ENCODE measurements at regions of chr1 and their contacts with region 1.

Region 1: DNA sequence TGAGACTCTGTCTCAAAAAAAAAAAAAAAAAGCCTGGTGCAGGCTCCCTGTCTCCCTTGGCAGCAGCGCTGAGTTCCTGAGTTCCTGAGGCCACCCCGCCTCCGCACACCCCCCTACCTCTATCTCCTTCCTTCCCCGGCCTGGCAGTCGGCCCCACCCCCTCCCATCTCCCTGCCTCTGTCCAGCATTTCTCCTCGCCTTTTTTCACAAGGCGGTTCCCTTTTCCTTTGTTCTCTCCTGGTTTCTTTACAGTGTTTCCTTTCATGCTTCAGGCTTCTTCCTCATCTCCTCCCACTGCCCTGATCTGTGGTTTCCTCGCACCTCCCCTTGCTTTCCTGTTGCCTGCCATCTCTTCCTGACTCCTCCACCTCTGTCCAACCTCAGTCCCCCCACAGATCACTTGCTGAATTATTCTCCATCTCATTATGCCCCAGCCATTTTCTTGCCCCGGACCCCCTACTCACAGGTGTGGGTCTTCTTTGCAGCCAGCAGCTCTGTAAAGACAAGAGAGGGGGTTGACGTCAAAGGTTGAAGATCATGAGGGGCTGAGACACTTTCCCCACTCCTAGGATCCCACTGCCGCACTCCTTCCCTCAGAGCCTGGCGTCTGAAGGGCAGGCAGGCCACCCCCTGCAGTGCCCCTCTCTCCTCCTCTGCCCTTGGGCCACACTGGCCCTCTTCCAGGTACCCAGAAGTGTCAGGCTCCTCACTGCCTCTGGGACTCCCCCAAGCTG is 2.5 kb downstream of the RORC start:
- DNase-seq: no peak
- H3K4me3 Mint-ChIP-seq: peak overlapping the region; percentile 22
- H3K27ac Mint-ChIP-seq: peak overlapping the region; percentile 86
- H3K4me1 Mint-ChIP-seq: peaks cover 69% of the 10 kb centered on the region
- H3K27me3 Mint-ChIP-seq: no peaks in the 10 kb centered on the region

Region 2: GRCh38 chr1:151611832-151612500 is 217.2 kb before region 1 on chr1 and contains the start of gene SNX27:
- CTCF ChIA-PET with region 1: no interaction called
- POLR2A ChIA-PET with region 1: no interaction called
- intact Hi-C with region 1: loop called (anchors 2 kb)
- DNase-seq: peak; percentile 93
- H3K4me3 Mint-ChIP-seq: peak within 1 kb of the TSS; percentile 94
- H3K27ac Mint-ChIP-seq: peak within 1 kb of the TSS; percentile 79
- H3K4me1 Mint-ChIP-seq: peaks cover 49% of the 10 kb centered on the region
- H3K27me3 Mint-ChIP-seq: peaks cover 1% of the 10 kb centered on the region
- total RNA-seq, gene SNX27: 27.1 to 30.7 TPM

Measured in activated CD4-positive, alpha-beta memory T cell treated with anti-CD3 and anti-CD28 coated beads for 36 hours (primary cell).